SK-N-SH (cell line): ENCODE measurements at regions of chr12 and their contacts with region 1.

Region 1: DNA sequence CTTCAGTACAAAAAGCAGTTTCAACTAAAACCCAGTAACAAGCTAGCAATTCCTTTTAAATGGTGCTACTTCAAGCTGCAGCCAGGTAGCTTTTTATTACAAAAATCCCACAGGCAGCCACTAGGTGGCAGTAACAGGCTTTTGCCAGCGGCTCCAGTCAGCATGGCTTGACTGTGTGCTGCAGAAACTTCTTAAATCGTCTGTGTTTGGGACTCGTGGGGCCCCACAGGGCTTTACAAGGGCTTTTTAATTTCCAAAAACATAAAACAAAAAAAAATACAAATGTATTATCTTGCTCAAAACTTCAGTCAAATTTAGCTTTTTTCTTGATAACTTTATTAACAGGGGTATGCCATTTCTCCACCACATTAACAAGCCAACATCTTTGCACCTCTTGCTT is 3.6 kb upstream of the CLEC4E start:
- DNase-seq: peak; percentile 49
- H3K4me3 ChIP-seq: peak overlapping the region in 1 of 2 experiments; percentile 45; a peak in 1 of 4 replicates
- H3K27ac ChIP-seq: no peak overlapping the region
- H3K4me1 ChIP-seq: no peaks in the 10 kb centered on the region
- H3K27me3 ChIP-seq: no peaks in the 10 kb centered on the region; the same call in 1 of the 2 replicates
- CTCF ChIP-seq: peak; percentile 97
- EP300 ChIP-seq: no peak
- RAD21 ChIP-seq: peak; percentile 68

Region 2: GRCh38 chr12:8554451-8555195 is 10.3 kb after region 1 on chr12:
- CTCF ChIA-PET with region 1: interaction called, 31 read pairs
- POLR2A ChIA-PET with region 1: no interaction called
- DNase-seq: no peak
- H3K4me3 ChIP-seq: no peak overlapping the region
- H3K27ac ChIP-seq: no peak overlapping the region
- H3K4me1 ChIP-seq: no peaks in the 10 kb centered on the region
- H3K27me3 ChIP-seq: no peaks in the 10 kb centered on the region
- CTCF ChIP-seq: no peak
- EP300 ChIP-seq: no peak
- RAD21 ChIP-seq: no peak

Region 3: GRCh38 chr12:8577879-8578278 is 33.6 kb after region 1 on chr12:
- CTCF ChIA-PET with region 1: interaction called, 12 read pairs
- POLR2A ChIA-PET with region 1: no interaction called
- DNase-seq: no peak
- H3K4me3 ChIP-seq: no peak overlapping the region
- H3K27ac ChIP-seq: no peak overlapping the region
- H3K4me1 ChIP-seq: no peaks in the 10 kb centered on the region
- H3K27me3 ChIP-seq: peaks cover 11% of the 10 kb centered on the region; the same call in 1 of the 2 replicates
- CTCF ChIP-seq: no peak
- EP300 ChIP-seq: no peak
- RAD21 ChIP-seq: no peak

Region 4: GRCh38 chr12:8609061-8609570 is 64.8 kb after region 1 on chr12:
- CTCF ChIA-PET with region 1: interaction called, 33 read pairs
- POLR2A ChIA-PET with region 1: no interaction called
- DNase-seq: peak; percentile 59
- H3K4me3 ChIP-seq: peak overlapping the region in 1 of 2 experiments; percentile 43; a peak in 1 of 4 replicates
- H3K27ac ChIP-seq: no peak overlapping the region
- H3K4me1 ChIP-seq: no peaks in the 10 kb centered on the region
- H3K27me3 ChIP-seq: peaks cover 18% of the 10 kb centered on the region
- CTCF ChIP-seq: peak; percentile 76
- EP300 ChIP-seq: no peak
- RAD21 ChIP-seq: peak; percentile 69

Region 5: DNA sequence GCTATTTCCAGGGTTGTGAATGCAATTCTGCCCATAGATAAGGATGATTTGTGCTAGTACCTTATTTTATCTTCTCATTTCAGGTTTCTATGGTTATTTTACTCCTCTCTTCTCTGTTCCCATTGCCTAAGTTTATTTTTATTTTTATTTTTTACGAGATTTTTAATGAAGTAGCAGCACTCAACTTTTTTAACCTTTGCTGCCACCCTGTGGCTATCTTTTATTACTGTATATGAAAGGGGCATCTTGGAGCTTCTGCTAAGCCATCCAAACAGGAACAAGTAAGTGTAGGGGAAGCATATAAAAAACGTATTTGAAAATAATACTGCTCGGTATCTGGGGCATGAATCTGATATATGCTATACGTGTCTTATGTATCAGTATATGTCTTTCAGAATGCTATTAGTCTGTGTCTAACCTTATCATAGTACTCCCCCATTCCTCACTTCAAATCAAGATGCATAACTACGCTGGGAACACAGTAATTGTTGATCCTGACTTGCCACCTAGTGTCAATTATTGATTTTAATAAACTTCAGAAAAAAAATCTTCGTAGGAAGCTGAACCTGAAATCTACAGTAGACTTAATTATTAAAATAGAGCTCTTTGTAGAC is 505.3 kb after region 1 on chr12:
- CTCF ChIA-PET with region 1: interaction called, 12 read pairs
- POLR2A ChIA-PET with region 1: no interaction called
- DNase-seq: peak; percentile 44
- H3K4me3 ChIP-seq: no peak overlapping the region
- H3K27ac ChIP-seq: no peak overlapping the region
- H3K4me1 ChIP-seq: peaks cover 0 to 3% of the 10 kb centered on the region in 2 experiments; a peak in 2 of 4 replicates
- H3K27me3 ChIP-seq: no peaks in the 10 kb centered on the region
- CTCF ChIP-seq: peak; percentile 73
- EP300 ChIP-seq: no peak
- RAD21 ChIP-seq: peak; percentile 61